ENCODE measurements at regions of chr9 and their contacts with region 1.

Region 1: DNA sequence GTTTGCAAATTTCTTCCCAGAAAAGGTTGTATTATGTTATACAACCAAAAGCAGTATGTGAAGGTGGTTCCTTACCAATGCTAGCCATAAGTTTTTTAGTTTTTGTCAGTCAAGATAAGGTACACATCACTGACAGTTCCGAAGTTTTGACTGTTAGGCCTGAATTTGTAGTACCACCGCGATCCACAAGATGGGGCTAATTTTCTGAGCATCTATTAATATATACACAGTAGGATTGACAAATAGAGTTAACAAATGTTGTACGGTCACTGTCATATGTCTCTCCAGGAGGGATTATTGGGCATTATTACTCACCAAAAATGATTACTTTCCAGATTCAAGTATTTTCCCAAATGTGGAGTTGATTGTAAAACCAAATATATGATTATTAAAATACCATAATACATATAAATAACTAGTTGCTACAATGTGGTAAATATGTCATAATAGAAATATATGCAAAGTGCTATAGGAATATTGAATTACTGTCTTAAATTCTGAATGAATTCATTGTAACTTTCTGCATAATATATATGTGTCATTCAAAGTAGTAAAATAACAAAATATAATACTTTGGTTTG is 28.4 kb upstream of the LRRC19 start:
- DNase-seq: peak; percentile 16
- H3K4me3 ChIP-seq: no peak overlapping the region
- CTCF ChIP-seq: peak; percentile 76

Region 2: DNA sequence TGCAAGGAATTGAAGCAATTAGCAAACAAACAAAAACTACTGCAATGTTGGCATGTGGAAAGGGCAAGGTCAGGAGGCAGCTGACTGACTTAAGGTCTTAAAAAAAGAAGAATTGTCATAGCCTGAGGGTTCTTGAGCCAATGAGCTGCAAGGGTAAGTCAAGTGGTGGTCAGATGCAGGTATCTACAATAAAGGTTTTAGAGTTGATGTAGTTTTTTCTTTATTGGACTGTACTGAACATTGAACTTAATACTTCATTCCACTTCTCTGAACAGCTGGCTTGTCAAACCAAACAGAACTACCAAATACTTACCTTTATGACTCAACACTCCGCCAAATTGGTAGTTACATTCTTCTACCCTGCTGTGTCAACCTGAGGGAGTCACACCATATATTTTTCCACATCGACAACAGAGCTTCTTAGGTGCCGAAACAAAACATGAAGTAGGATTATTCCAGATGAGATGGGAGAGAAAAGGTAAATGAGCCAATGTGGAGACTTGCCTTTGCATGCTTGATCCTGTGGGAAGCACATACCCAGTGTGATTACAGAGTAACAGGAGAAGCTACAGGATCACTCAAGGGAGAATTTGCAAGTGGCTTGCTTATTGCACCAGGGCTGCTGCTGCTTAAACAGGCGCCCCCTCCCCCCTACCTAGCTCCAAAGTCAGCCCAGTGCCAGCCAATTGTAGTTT is 227.8 kb after region 1 on chr9:
- in situ Hi-C with region 1: loop called (anchors 25 kb)
- DNase-seq: no peak
- H3K4me3 ChIP-seq: no peak overlapping the region
- CTCF ChIP-seq: no peak